IMR-90 (cell line): ENCODE measurements at regions of chr1 and their contacts with region 1.

Region 1: GRCh38 chr1:26321315-26322041 is 3.7 kb downstream of the CD52 start:
- DNase-seq: peak; percentile 77
- ATAC-seq: peak; percentile 100
- H3K4me3 ChIP-seq: no peak overlapping the region
- H3K27ac ChIP-seq: no peak overlapping the region
- H3K4me1 ChIP-seq: peaks cover 3% of the 10 kb centered on the region
- H3K27me3 ChIP-seq: peaks cover 9% of the 10 kb centered on the region
- CTCF ChIP-seq: peak; percentile 97
- POLR2A ChIP-seq: 0 out of 2 replicates have a peak, but pooled peaks have one; percentile 38
- RAD21 ChIP-seq: peak; percentile 98

Region 2: GRCh38 chr1:26035959-26036755 is 285.3 kb before region 1 on chr1:
- CTCF ChIA-PET with region 1: no interaction called
- POLR2A ChIA-PET with region 1: no interaction called
- dilution Hi-C with region 1: no loop called
- in situ Hi-C with region 1: no loop called
- intact Hi-C with region 1: loop called (anchors 2 kb)
- DNase-seq: peak; percentile 53
- ATAC-seq: peak; percentile 94
- H3K4me3 ChIP-seq: peak overlapping the region; percentile 66
- H3K27ac ChIP-seq: no peak overlapping the region
- H3K4me1 ChIP-seq: peaks cover 6% of the 10 kb centered on the region
- H3K27me3 ChIP-seq: peaks cover 17% of the 10 kb centered on the region; the same call in 1 of the 2 replicates
- CTCF ChIP-seq: peak; percentile 96
- POLR2A ChIP-seq: no peak
- RAD21 ChIP-seq: peak; percentile 88

Region 3: DNA sequence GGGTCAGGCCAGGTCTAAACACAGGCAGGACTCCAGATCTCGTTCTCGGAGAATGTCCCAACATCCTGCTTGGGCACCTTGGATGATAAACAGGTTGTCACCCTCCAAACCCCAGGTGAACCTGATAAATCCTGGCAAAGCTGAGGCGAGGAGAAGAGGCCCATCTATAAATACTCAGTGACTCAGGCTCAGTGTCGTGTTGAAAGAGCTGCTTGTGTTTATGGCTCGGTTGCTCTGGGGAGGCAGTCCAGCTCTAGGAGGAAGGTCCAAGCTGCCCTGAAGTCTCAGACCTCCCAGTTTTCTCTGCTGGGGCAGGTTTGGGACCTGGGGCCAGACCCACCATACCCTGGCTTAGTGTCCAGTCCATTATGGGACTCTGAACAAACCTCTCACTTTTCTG is 238.2 kb before region 1 on chr1:
- CTCF ChIA-PET with region 1: no interaction called
- POLR2A ChIA-PET with region 1: no interaction called
- dilution Hi-C with region 1: no loop called
- in situ Hi-C with region 1: no loop called
- intact Hi-C with region 1: no loop called
- DNase-seq: peak; percentile 46
- ATAC-seq: peak; percentile 60
- H3K4me3 ChIP-seq: no peak overlapping the region
- H3K27ac ChIP-seq: no peak overlapping the region
- H3K4me1 ChIP-seq: peaks cover 1% of the 10 kb centered on the region; the same call in 1 of the 2 replicates
- H3K27me3 ChIP-seq: peaks cover 36% of the 10 kb centered on the region
- CTCF ChIP-seq: no peak
- POLR2A ChIP-seq: no peak
- RAD21 ChIP-seq: no peak

Region 4: DNA sequence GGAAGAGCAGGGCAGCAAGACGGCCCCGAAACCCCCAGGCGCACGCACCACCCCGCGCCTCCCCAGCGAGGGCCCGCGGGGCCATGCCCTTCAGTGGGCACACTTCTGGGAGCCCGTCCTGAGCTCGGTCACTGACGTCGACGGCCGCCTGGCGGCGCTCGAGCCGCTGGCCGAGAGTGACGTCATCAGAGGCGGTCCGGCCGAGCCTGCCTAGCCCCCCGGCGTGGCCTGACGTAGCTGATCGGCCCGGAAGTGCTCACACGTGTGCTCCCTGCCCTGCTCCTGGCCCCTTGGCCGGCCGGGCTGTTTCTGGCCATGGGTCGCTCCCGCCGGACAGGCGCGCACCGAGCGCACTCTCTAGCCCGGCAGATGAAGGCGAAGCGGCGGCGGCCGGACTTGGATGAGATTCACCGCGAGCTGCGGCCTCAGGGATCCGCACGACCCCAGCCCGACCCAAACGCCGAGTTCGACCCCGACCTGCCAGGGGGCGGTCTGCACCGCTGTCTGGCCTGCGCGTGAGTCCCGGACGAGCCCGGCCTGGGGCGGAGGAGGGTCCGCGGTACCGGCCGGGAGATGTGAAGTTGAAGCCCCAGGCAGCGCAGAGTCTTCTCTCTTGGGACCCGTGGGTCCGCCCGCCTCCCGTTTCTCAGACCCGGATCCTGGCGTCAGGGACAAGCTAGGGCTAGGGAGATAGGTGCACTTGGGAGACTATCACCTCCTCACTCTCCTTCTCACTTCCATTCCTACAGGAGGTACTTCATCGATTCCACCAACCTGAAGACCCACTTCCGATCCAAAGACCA is 151.6 kb before region 1 on chr1 and contains the start of gene ZNF593:
- CTCF ChIA-PET with region 1: interaction called, 3 read pairs
- POLR2A ChIA-PET with region 1: no interaction called
- dilution Hi-C with region 1: no loop called
- in situ Hi-C with region 1: no loop called
- intact Hi-C with region 1: loop called (anchors 1 kb)
- DNase-seq: peak; percentile 90
- ATAC-seq: peak; percentile 96
- H3K4me3 ChIP-seq: peak within 1 kb of the TSS; percentile 84
- H3K27ac ChIP-seq: peak within 1 kb of the TSS; percentile 66
- H3K4me1 ChIP-seq: peaks cover 5% of the 10 kb centered on the region; the same call in 1 of the 2 replicates
- H3K27me3 ChIP-seq: no peaks in the 10 kb centered on the region; the same call in 1 of the 2 replicates
- CTCF ChIP-seq: peak; percentile 98
- POLR2A ChIP-seq: peak; percentile 77
- RAD21 ChIP-seq: peak; percentile 55
- total RNA-seq, gene ZNF593: 22.2 and 22.8 TPM in 2 replicates

Region 5: DNA sequence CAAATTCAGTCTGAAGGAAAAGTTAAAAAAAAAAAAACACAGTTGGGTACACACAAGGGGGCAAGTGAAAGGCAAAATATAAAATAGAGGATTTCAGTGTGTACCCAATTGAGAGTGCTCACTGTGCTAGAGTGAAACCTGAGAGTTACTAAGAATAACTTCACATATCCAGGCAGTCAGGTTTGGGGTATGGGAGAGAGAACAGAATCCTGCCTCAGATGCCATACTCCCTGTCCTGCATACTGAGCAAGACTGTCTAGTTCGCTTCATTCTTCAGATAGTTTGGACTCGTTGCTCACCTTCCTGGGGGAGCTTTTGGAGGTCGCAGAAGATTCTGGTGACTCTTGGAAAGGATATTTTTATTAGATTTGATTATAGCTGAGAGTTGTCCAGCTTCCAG is 67.1 kb before region 1 on chr1:
- CTCF ChIA-PET with region 1: no interaction called
- POLR2A ChIA-PET with region 1: no interaction called
- dilution Hi-C with region 1: no loop called
- in situ Hi-C with region 1: no loop called
- intact Hi-C with region 1: no loop called
- DNase-seq: peak; percentile 4
- ATAC-seq: no peak
- H3K4me3 ChIP-seq: no peak overlapping the region
- H3K27ac ChIP-seq: no peak overlapping the region
- H3K4me1 ChIP-seq: no peaks in the 10 kb centered on the region
- H3K27me3 ChIP-seq: no peaks in the 10 kb centered on the region
- CTCF ChIP-seq: no peak
- POLR2A ChIP-seq: no peak
- RAD21 ChIP-seq: no peak

Region 6: DNA sequence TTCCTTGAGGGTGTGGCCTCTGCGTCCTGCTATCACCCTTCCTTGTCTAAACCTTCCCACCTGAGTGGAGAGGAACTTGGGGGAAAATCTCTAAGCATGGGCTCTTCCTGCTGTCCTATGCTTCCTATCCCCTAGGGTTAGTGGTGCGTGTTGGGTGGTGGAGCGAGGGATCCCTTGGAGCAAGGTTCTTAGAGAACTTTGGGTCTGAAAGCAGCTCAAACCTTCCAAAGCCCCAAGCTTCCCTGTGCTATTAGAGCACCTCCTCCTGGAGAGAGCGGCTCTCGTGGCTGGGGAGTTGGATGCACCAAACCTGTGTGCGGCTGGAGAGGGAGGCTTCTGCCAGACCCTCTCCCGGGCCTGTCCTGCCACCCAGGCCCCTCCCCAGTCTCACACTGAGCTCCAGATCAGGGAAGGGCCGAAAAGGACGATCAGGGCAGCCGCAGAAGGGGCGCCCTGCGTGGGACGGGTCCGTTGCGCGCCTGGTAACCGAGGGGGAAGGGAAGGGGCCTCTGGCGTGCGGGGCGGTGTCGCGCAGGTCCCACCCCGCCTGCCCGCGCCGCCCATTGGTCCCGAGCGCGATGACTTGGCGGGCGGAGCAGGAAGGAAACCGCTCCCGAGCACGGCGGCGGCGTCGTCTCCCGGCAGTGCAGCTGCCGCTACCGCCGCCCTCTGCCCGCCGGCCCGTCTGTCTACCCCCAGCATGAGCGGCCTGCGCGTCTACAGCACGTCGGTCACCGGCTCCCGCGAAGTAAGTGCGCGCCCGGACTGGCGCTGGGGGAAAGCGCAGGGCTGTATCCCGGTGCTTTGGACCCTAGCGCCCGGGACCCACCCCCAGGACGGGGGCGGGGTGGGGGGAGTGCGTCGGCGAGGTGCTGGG is 41.8 kb before region 1 on chr1 and contains the start of gene SH3BGRL3:
- CTCF ChIA-PET with region 1: interaction called, 18 read pairs
- POLR2A ChIA-PET with region 1: no interaction called
- dilution Hi-C with region 1: no loop called
- in situ Hi-C with region 1: no loop called
- intact Hi-C with region 1: loop called (anchors 1 kb)
- DNase-seq: peak; percentile 75
- ATAC-seq: peak; percentile 68
- H3K4me3 ChIP-seq: peak within 1 kb of the TSS; percentile 89
- H3K27ac ChIP-seq: peak within 1 kb of the TSS; percentile 95
- H3K4me1 ChIP-seq: peaks cover 64% of the 10 kb centered on the region
- H3K27me3 ChIP-seq: no peaks in the 10 kb centered on the region
- CTCF ChIP-seq: peak; percentile 46
- POLR2A ChIP-seq: peak; percentile 93
- RAD21 ChIP-seq: no peak; the same call in 1 of the 2 replicates
- total RNA-seq, gene SH3BGRL3: 32.2 and 35.0 TPM in 2 replicates

Region 7: GRCh38 chr1:26306290-26307229 is 14.9 kb before region 1 on chr1 and contains the start of gene UBXN11:
- CTCF ChIA-PET with region 1: interaction called, 3 read pairs
- POLR2A ChIA-PET with region 1: interaction called, 14 read pairs
- dilution Hi-C with region 1: no loop called
- in situ Hi-C with region 1: no loop called
- intact Hi-C with region 1: no loop called
- DNase-seq: peak; percentile 94
- ATAC-seq: peak; percentile 99
- H3K4me3 ChIP-seq: peak within 1 kb of the TSS; percentile 90
- H3K27ac ChIP-seq: peak within 1 kb of the TSS; percentile 62
- H3K4me1 ChIP-seq: peaks cover 14% of the 10 kb centered on the region
- H3K27me3 ChIP-seq: no peaks in the 10 kb centered on the region
- CTCF ChIP-seq: no peak
- POLR2A ChIP-seq: peak; percentile 31; the same call in 1 of the 2 replicates
- RAD21 ChIP-seq: no peak
- total RNA-seq, gene UBXN11: 3.6 and 5.2 TPM in 2 replicates

Region 8: DNA sequence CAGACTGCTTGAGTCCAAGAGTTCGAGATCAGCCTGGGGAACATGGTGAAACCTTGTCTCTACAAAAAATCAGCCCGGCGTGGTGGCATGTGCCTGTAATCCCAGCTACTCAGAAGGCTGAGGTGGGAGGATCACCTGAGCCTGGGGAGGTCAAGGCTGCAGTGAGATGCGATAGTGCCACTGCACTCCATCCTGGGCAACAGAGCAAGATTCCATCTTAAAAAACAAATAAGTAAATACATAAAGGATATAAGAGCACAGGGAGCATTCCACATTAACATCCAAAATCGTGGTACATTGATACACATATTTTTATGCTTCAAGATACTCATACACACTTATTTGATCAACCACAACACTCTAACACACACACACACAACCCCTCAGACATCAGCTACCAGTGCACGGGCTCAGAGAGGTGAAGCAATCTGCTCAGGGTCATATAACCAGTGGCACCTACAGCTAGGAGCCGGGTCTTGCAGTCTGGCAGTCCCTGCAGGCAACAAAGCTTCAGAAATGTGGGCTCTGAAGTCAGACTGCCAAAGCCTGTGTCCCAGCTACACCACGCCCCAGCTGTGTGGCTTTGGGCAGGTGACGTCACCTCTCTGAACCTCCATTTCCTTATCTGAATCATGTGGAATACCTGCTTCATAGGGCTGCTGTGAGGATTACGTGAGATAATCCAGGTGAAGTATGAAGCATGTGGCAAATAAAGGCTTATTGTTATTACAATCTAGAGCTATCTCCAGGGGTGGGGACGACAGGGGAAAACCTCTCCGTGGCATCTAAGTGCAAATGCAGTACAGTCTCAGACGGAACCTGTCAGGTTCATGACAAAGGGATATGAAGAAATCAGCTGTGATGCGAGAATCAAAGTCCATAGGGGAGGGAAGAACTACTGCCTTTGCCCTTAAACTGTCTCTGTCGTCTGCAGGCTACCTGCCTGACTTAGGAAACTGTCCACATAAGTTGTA is 37.2 kb after region 1 on chr1:
- CTCF ChIA-PET with region 1: no interaction called
- POLR2A ChIA-PET with region 1: no interaction called
- dilution Hi-C with region 1: no loop called
- in situ Hi-C with region 1: no loop called
- intact Hi-C with region 1: no loop called
- DNase-seq: no peak
- ATAC-seq: no peak
- H3K4me3 ChIP-seq: no peak overlapping the region
- H3K27ac ChIP-seq: no peak overlapping the region
- H3K4me1 ChIP-seq: no peaks in the 10 kb centered on the region; the same call in 1 of the 2 replicates
- H3K27me3 ChIP-seq: peaks cover 83% of the 10 kb centered on the region
- CTCF ChIP-seq: no peak
- POLR2A ChIP-seq: no peak
- RAD21 ChIP-seq: no peak

Region 9: DNA sequence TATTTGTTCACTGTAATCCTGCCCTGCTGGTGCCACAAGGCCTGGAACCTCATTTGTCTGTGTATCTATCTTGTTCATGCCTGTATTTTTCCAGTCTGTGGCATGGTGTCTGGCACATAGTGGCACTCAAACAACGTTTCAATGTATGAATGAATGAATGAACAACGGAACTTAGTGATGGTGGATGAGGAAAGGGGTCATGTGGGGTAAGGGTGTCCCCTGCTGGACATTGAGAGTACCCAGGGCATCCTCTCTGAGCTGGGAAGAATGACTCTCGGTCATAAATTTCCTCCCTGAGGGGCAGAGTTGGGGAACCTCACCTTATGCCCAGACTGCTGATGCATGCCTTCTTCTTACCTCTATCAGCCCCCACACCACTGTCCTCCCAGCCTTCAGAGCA is 70.0 kb after region 1 on chr1:
- CTCF ChIA-PET with region 1: interaction called, 4 read pairs
- POLR2A ChIA-PET with region 1: no interaction called
- dilution Hi-C with region 1: no loop called
- in situ Hi-C with region 1: no loop called
- intact Hi-C with region 1: loop called (anchors 2 kb)
- DNase-seq: peak; percentile 59
- ATAC-seq: peak; percentile 94
- H3K4me3 ChIP-seq: no peak overlapping the region
- H3K27ac ChIP-seq: no peak overlapping the region
- H3K4me1 ChIP-seq: no peaks in the 10 kb centered on the region
- H3K27me3 ChIP-seq: peaks cover 2% of the 10 kb centered on the region; the same call in 1 of the 2 replicates
- CTCF ChIP-seq: peak; percentile 90
- POLR2A ChIP-seq: no peak
- RAD21 ChIP-seq: peak; percentile 94